ENCODE measurements at regions of chrX and their contacts with region 1.

Region 1: GRCh38 chrX:29687687-29688086 is 527.7 kb upstream of the MAGEB2 start:
- DNase-seq: no peak
- H3K4me3 ChIP-seq: no peak overlapping the region
- H3K4me3 Mint-ChIP-seq: no peak overlapping the region
- H3K27ac Mint-ChIP-seq: no peak overlapping the region
- H3K4me1 ChIP-seq: no peaks in the 10 kb centered on the region
- H3K4me1 Mint-ChIP-seq: no peaks in the 10 kb centered on the region
- H3K27me3 ChIP-seq: no peaks in the 10 kb centered on the region
- H3K27me3 Mint-ChIP-seq: no peaks in the 10 kb centered on the region
- CTCF ChIP-seq: no peak

Region 2: DNA sequence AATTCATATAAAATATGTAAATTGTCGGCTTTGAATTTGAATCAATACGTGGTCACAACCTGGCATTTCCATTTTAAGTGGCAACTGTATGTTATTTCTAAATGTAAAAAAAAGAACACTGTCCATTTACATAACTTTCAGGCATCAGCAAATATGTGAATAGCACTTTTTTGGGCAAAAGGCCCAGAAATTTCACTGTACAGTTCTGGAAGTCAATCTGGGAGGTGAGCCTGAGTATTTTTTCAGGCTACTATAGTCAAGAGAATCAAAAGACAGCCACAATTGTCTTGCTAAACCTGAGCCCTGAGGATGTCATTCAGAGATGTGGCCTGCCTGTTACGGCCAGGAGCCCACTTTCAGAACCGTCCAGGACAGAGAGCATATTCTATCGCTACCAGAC is 16.3 kb before region 1 on chrX:
- CTCF ChIA-PET with region 1: no interaction called
- POLR2A ChIA-PET with region 1: no interaction called
- intact Hi-C with region 1: no loop called
- DNase-seq: no peak
- H3K4me3 ChIP-seq: no peak overlapping the region
- H3K4me3 Mint-ChIP-seq: no peak overlapping the region
- H3K27ac Mint-ChIP-seq: no peak overlapping the region
- H3K4me1 ChIP-seq: no peaks in the 10 kb centered on the region
- H3K4me1 Mint-ChIP-seq: no peaks in the 10 kb centered on the region
- H3K27me3 ChIP-seq: no peaks in the 10 kb centered on the region
- H3K27me3 Mint-ChIP-seq: no peaks in the 10 kb centered on the region
- CTCF ChIP-seq: no peak

Region 3: GRCh38 chrX:29903360-29903759 is 215.7 kb after region 1 on chrX:
- CTCF ChIA-PET with region 1: no interaction called
- POLR2A ChIA-PET with region 1: no interaction called
- intact Hi-C with region 1: loop called (anchors 5 kb)
- DNase-seq: no peak
- H3K4me3 ChIP-seq: no peak overlapping the region
- H3K4me3 Mint-ChIP-seq: no peak overlapping the region
- H3K27ac Mint-ChIP-seq: no peak overlapping the region
- H3K4me1 ChIP-seq: no peaks in the 10 kb centered on the region
- H3K4me1 Mint-ChIP-seq: no peaks in the 10 kb centered on the region
- H3K27me3 ChIP-seq: no peaks in the 10 kb centered on the region
- H3K27me3 Mint-ChIP-seq: no peaks in the 10 kb centered on the region
- CTCF ChIP-seq: peak in 1 of 2 experiments; percentile 15